Activated CD4-positive, alpha-beta memory T cell treated with anti-CD3 and anti-CD28 coated beads for 36 hours (primary cell): ENCODE measurements at regions of chr19 and their contacts with region 1.

Region 1: GRCh38 chr19:52139252-52140031 is at the start of gene ZNF616:
- DNase-seq: peak; percentile 99
- H3K4me3 Mint-ChIP-seq: peak within 1 kb of the TSS; percentile 92
- H3K27ac Mint-ChIP-seq: peak within 1 kb of the TSS; percentile 95
- H3K4me1 Mint-ChIP-seq: peaks cover 22% of the 10 kb centered on the region
- H3K27me3 Mint-ChIP-seq: no peaks in the 10 kb centered on the region
- total RNA-seq, gene ZNF616: 10.5 to 11.6 TPM

Region 2: GRCh38 chr19:51959791-51960190 is 179.7 kb before region 1 on chr19:
- CTCF ChIA-PET with region 1: no interaction called
- POLR2A ChIA-PET with region 1: no interaction called
- intact Hi-C with region 1: no loop called
- DNase-seq: no peak
- H3K4me3 Mint-ChIP-seq: no peak overlapping the region
- H3K27ac Mint-ChIP-seq: no peak overlapping the region
- H3K4me1 Mint-ChIP-seq: no peaks in the 10 kb centered on the region
- H3K27me3 Mint-ChIP-seq: no peaks in the 10 kb centered on the region

Region 3: GRCh38 chr19:52095172-52096014 is 44.0 kb before region 1 on chr19 and contains the start of gene ZNF841:
- CTCF ChIA-PET with region 1: no interaction called
- POLR2A ChIA-PET with region 1: no interaction called
- intact Hi-C with region 1: loop called (anchors 1 kb)
- DNase-seq: peak; percentile 95
- H3K4me3 Mint-ChIP-seq: peak within 1 kb of the TSS; percentile 87
- H3K27ac Mint-ChIP-seq: peak within 1 kb of the TSS; percentile 91
- H3K4me1 Mint-ChIP-seq: peaks cover 29% of the 10 kb centered on the region
- H3K27me3 Mint-ChIP-seq: no peaks in the 10 kb centered on the region
- total RNA-seq, gene ZNF841: 14.5 to 17.0 TPM

Region 4: GRCh38 chr19:52171321-52172169 is 32.1 kb after region 1 on chr19 and contains the start of gene ZNF836:
- CTCF ChIA-PET with region 1: interaction called, 3 read pairs
- POLR2A ChIA-PET with region 1: no interaction called
- intact Hi-C with region 1: loop called (anchors 1 kb)
- DNase-seq: peak; percentile 95
- H3K4me3 Mint-ChIP-seq: peak within 1 kb of the TSS; percentile 99
- H3K27ac Mint-ChIP-seq: peak within 1 kb of the TSS; percentile 86
- H3K4me1 Mint-ChIP-seq: peaks cover 23% of the 10 kb centered on the region
- H3K27me3 Mint-ChIP-seq: no peaks in the 10 kb centered on the region
- total RNA-seq, gene ZNF836: 8.2 to 12.8 TPM

Region 5: GRCh38 chr19:52189735-52190486 is 50.5 kb after region 1 on chr19 and contains the start of gene PPP2R1A:
- CTCF ChIA-PET with region 1: interaction called, 3 read pairs
- POLR2A ChIA-PET with region 1: no interaction called
- intact Hi-C with region 1: loop called (anchors 1 kb)
- DNase-seq: peak; percentile 98
- H3K4me3 Mint-ChIP-seq: peak within 1 kb of the TSS; percentile 96
- H3K27ac Mint-ChIP-seq: peak within 1 kb of the TSS; percentile 99
- H3K4me1 Mint-ChIP-seq: peaks cover 41% of the 10 kb centered on the region
- H3K27me3 Mint-ChIP-seq: no peaks in the 10 kb centered on the region
- total RNA-seq, gene PPP2R1A: 224 to 229 TPM

Region 6: DNA sequence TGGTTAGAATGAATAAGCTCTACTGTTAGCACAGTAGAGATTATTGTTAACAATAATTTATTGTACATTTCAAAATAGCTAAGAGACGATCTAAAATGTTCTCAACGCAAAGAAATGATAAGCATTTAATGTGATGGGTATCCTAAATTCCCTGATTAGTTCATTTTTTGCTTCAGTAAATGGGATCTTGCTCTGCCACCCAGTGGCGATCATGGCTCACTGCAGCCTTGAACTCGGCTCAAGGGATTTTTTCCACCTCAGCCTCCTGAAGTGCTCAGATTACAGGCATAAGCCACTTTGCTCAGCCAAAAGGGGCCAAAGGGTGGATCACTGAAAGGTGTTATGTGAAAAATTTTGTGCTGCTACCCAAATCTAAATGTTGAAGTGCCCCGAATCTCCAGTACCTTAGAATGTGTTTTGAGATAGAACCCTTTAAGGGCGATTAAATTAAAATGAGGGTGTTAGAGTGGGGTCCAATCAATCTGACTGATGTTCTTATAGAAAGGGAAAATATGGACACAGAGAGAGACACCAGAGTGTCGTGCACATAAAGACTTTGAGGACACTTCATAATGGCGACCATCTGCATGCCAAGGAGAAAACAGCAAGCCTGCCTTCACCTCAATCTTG is 98.4 kb after region 1 on chr19:
- CTCF ChIA-PET with region 1: interaction called, 21 read pairs
- POLR2A ChIA-PET with region 1: no interaction called
- intact Hi-C with region 1: loop called (anchors 1 kb)
- DNase-seq: peak; percentile 74
- H3K4me3 Mint-ChIP-seq: peak overlapping the region; percentile 5
- H3K27ac Mint-ChIP-seq: no peak overlapping the region
- H3K4me1 Mint-ChIP-seq: no peaks in the 10 kb centered on the region
- H3K27me3 Mint-ChIP-seq: no peaks in the 10 kb centered on the region

Region 7: GRCh38 chr19:52269338-52270261 is 130.2 kb after region 1 on chr19 and contains the start of gene ZNF766:
- CTCF ChIA-PET with region 1: no interaction called
- POLR2A ChIA-PET with region 1: no interaction called
- intact Hi-C with region 1: loop called (anchors 1 kb)
- DNase-seq: peak; percentile 98
- H3K4me3 Mint-ChIP-seq: peak within 1 kb of the TSS; percentile 96
- H3K27ac Mint-ChIP-seq: peak within 1 kb of the TSS; percentile 95
- H3K4me1 Mint-ChIP-seq: peaks cover 37% of the 10 kb centered on the region
- H3K27me3 Mint-ChIP-seq: no peaks in the 10 kb centered on the region
- total RNA-seq, gene ZNF766: 21.6 to 23.2 TPM